Activated naive CD8-positive, alpha-beta T cell treated with anti-CD3 and anti-CD28 coated beads, Interleukin-2, amount 10 ng/mL, durations not matched to agents 7 days and 5 days (primary cell): ENCODE measurements at regions of chr12 and their contacts with region 1.

Region 1: GRCh38 chr12:56117778-56118687 is at the start of gene ZC3H10:
- DNase-seq: peak; percentile 94
- ATAC-seq: peak; percentile 81
- H3K4me3 Mint-ChIP-seq: peak within 1 kb of the TSS; percentile 98
- H3K27ac Mint-ChIP-seq: peak within 1 kb of the TSS; percentile 99
- H3K4me1 Mint-ChIP-seq: peaks cover 24% of the 10 kb centered on the region
- H3K27me3 Mint-ChIP-seq: no peaks in the 10 kb centered on the region
- total RNA-seq, gene ZC3H10: 10.6 to 12.0 TPM

Region 2: GRCh38 chr12:55817346-55818139 is 300.5 kb before region 1 on chr12 and contains the starts of genes ORMDL2 and SARNP:
- POLR2A ChIA-PET with region 1: interaction called, 13 read pairs
- DNase-seq: peak; percentile 88
- ATAC-seq: peak; percentile 96
- H3K4me3 Mint-ChIP-seq: no peak within 1 kb of the TSS
- H3K27ac Mint-ChIP-seq: no peak within 1 kb of the TSS
- H3K4me1 Mint-ChIP-seq: peaks cover 35% of the 10 kb centered on the region
- H3K27me3 Mint-ChIP-seq: no peaks in the 10 kb centered on the region
- total RNA-seq, gene ORMDL2: 43.4 to 45.4 TPM
- total RNA-seq, gene SARNP: 80.6 to 82.4 TPM

Region 3: GRCh38 chr12:56041552-56042429 is 76.2 kb before region 1 on chr12 and contains the start of gene RPS26:
- POLR2A ChIA-PET with region 1: interaction called, 23 read pairs
- DNase-seq: peak; percentile 85
- ATAC-seq: peak; percentile 94
- H3K4me3 Mint-ChIP-seq: peak within 1 kb of the TSS; percentile 93
- H3K27ac Mint-ChIP-seq: peak within 1 kb of the TSS; percentile 94
- H3K4me1 Mint-ChIP-seq: peaks cover 33% of the 10 kb centered on the region
- H3K27me3 Mint-ChIP-seq: no peaks in the 10 kb centered on the region
- total RNA-seq, gene RPS26: 39.1 to 42.6 TPM

Region 4: GRCh38 chr12:56062996-56063395 is 55.0 kb before region 1 on chr12:
- POLR2A ChIA-PET with region 1: no interaction called
- DNase-seq: no peak
- ATAC-seq: no peak
- H3K4me3 Mint-ChIP-seq: no peak overlapping the region
- H3K27ac Mint-ChIP-seq: no peak overlapping the region
- H3K4me1 Mint-ChIP-seq: no peaks in the 10 kb centered on the region
- H3K27me3 Mint-ChIP-seq: peaks cover 4% of the 10 kb centered on the region

Region 5: DNA sequence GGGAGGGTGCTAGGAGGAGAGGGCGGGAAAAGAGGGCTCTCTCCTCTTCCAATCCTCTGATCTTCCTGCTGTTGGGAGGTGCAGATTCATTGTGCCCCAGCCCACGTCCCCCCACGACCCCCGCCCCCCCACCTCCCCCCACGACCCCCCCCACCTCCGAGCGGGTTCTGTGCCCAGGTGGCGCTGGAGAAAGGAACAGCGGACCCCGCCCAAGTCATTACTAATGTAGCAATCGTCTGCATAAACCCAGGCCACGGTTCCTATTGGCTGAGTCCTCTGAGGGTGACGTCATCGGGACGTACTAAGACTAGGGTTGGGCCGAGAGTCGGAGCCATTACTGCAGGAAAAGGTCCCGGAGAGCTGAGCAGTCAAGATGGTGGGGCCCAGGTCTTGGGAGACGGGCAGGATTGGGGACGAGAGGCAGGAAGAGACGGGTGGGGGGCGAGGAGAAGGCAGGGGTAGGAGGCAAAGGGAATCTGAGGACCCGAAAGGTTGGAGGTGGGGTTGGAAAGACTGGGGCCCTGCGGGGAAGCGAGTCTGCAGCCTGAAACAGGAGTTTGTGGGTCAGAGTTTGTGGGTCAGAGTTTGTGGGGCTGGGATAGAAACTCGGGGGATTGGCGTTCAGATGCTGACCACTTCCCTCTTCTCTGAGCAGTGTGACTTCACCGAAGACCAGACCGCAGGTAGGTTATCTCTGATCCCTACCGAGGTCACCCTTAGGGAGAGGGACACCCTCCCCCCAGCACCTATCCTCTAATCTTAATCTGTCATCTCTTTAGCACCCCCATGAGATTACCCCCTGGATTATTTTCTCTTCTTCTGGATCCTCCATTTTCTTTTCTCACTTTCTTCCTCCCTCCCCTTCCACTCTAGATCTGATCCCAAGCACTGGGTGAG is 40.2 kb after region 1 on chr12 and contains the start of gene MYL6:
- POLR2A ChIA-PET with region 1: interaction called, 145 read pairs
- DNase-seq: peak; percentile 81
- ATAC-seq: peak; percentile 82
- H3K4me3 Mint-ChIP-seq: peak within 1 kb of the TSS; percentile 96
- H3K27ac Mint-ChIP-seq: peak within 1 kb of the TSS; percentile 97
- H3K4me1 Mint-ChIP-seq: peaks cover 38% of the 10 kb centered on the region
- H3K27me3 Mint-ChIP-seq: no peaks in the 10 kb centered on the region
- total RNA-seq, gene MYL6: 1,083 to 1,169 TPM

Region 6: GRCh38 chr12:56221527-56222387 is 103.7 kb after region 1 on chr12 and contains the start of gene RNF41:
- POLR2A ChIA-PET with region 1: interaction called, 39 read pairs
- DNase-seq: peak; percentile 92
- ATAC-seq: peak; percentile 83
- H3K4me3 Mint-ChIP-seq: peak within 1 kb of the TSS; percentile 96
- H3K27ac Mint-ChIP-seq: peak within 1 kb of the TSS; percentile 91
- H3K4me1 Mint-ChIP-seq: peaks cover 34% of the 10 kb centered on the region
- H3K27me3 Mint-ChIP-seq: no peaks in the 10 kb centered on the region
- total RNA-seq, gene RNF41: 36.1 to 38.1 TPM